ENCODE measurements at regions of chr9 and their contacts with region 1.

Region 1: DNA sequence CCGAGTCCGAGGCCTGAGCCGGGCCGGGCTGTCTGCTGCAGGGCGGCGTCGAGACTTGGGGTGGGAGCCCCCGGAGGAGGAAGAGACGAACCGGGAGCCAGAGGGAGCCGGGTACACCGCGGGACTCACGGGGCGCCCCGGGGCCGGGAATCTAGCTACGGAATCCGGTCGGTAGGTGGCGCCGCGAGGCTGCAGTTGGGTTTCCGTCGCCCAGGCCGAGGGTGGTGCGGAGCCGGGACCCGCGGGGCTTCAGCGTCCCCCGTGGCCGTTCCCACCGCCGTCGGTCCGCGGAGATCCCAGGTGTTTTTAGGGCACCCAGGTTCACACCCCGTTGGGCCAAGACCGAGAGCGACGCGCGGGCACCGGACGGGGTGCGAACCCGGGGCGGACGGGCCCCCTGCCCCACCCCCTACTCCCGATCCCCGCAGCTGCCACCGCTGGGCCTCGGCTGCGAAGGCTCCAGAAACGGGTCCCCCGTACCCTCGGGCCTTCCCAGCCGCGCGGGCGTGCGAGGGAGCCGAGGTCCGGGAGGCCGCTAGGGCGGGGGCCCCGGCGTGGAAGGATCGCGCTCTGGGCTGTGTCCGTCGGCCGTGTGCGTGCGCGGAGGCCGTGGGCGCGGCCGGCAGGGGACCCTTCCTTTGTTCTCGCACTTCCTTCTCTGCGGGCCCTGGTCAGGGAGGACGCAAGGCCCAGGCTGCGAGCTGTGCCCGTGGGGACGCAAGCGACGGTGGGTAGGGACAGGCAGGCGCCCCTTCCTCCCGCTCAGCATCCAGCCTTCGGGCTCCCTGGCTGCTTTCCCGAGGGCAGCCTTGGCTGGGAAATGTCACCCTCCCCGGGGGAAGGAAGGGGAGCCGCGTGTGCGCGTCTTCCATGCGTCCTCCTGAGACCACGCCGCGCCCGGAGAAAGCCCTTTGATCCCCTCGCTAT is 146.6 kb downstream of the GAPVD1 start:
- DNase-seq: no peak
- H3K4me3 ChIP-seq: peak overlapping the region; percentile 53 to 78
- H3K27ac ChIP-seq: peak overlapping the region; percentile 78
- H3K4me1 ChIP-seq: peaks cover 14% of the 10 kb centered on the region
- H3K27me3 ChIP-seq: no peaks in the 10 kb centered on the region
- CTCF ChIP-seq: peak; percentile 20 to 83 (median 74)
- POLR2A ChIP-seq: no peak

Region 2: DNA sequence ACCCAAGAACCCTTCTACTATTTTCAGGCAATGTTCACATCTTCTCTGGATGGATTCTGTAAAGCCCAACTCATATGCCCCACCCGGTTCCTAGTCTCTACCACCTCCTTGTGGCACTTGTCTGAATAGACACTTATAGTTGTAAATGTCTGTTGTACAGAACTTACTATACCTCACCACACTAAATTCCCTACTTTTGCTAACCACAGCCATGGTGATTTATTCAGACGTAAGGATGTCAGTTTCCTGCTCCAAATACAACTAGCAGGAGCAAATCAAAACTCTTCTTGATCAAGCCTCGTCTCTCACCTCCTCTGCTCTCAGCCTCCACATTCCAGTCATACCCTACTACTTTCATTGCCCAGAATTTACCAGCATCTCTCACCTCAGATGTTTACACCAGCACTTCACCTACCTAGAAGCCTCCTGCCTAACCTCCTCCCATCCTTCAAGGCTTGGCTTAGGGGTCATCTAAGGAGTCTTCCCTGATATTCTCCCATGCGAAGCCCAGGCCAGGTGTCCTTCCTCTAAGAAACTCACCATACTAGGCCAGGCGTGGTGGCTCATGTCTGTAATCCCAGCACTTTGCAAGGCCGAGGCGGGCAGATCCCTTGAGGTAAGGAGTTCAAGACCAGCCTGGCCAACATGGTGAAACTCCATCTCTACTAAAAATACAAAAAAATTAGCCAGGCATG is 223.3 kb after region 1 on chr9:
- intact Hi-C with region 1: loop called (anchors 10 kb)
- DNase-seq: no peak
- H3K4me3 ChIP-seq: no peak overlapping the region
- H3K27ac ChIP-seq: no peak overlapping the region
- H3K4me1 ChIP-seq: peaks cover 27% of the 10 kb centered on the region
- H3K27me3 ChIP-seq: no peaks in the 10 kb centered on the region
- CTCF ChIP-seq: peak in 2 of 3 experiments; percentile 37 to 51
- POLR2A ChIP-seq: no peak

Region 3: DNA sequence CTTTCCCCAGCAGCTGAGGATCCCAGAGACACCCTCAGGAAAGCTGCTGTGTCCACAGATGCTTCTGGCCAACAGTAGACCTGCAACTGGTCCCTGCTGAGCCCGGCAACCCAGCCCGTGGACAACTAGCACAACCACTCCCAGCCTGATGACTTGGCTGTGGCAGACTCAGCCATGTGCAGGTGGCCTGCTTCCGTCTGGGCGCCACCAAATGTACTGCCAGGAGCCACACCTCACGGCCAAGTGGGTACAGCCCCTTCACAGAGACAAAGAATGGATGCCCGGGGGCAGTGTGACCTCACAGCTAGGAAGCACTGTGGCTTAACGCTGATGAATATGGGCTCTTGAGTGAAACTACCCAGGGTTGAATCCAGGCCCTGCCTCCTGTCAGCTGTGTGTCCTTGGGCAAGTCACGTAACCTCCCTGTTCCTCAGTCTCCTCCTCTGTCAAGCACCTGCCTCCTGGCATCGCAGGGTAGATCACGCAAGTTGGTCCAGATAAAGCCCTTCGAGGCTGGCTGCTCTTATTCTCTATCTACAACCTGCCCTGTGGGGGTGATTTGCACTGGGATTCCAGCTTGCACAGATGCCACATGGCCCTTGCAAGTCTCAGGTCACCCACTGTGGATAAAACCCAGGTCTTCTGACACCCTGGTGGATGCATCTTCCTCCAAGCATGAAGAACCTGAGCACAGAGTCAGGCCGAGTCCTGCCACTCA is 563.9 kb after region 1 on chr9:
- intact Hi-C with region 1: no loop called
- DNase-seq: peak in 1 of 2 donors; percentile 76
- H3K4me3 ChIP-seq: no peak overlapping the region
- H3K27ac ChIP-seq: no peak overlapping the region
- H3K4me1 ChIP-seq: no peaks in the 10 kb centered on the region
- H3K27me3 ChIP-seq: no peaks in the 10 kb centered on the region
- CTCF ChIP-seq: no peak
- POLR2A ChIP-seq: no peak

Region 4: DNA sequence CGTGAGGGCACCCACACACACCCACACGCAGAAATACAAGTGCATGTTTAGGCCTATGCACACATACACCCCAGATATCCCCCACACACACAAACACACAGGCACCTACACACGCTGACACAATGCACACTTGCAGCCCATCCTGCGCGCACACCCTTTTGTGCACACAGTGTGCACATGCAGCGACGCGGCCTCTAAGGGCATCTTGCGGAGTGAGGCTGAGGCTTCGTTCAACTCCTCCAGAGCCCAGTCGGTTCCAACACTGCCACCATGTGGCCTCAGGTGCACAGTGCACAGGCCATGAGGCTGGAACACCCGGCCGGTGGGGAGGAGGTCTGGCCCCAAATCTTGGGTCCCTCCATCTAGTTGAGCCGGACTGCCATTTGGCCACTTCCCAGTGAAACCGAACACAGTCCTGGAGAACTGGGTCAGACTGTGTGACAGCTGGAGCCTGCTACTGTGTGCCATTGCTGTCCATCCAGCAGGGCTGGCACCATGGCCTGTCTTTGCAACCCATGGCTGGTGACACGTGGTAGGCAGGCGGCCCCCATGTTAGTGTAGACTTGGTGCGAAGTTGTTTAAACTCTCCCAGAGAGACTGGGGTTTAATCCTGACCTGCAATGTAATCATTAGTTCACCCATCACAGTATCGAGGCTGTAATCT is 820.7 kb after region 1 on chr9:
- intact Hi-C with region 1: loop called (anchors 5 kb)
- DNase-seq: peak; percentile 80 to 91
- H3K4me3 ChIP-seq: no peak overlapping the region
- H3K27ac ChIP-seq: no peak overlapping the region
- H3K4me1 ChIP-seq: no peaks in the 10 kb centered on the region
- H3K27me3 ChIP-seq: no peaks in the 10 kb centered on the region
- CTCF ChIP-seq: peak; percentile 63 to 89 (median 75)
- POLR2A ChIP-seq: no peak

Region 5: DNA sequence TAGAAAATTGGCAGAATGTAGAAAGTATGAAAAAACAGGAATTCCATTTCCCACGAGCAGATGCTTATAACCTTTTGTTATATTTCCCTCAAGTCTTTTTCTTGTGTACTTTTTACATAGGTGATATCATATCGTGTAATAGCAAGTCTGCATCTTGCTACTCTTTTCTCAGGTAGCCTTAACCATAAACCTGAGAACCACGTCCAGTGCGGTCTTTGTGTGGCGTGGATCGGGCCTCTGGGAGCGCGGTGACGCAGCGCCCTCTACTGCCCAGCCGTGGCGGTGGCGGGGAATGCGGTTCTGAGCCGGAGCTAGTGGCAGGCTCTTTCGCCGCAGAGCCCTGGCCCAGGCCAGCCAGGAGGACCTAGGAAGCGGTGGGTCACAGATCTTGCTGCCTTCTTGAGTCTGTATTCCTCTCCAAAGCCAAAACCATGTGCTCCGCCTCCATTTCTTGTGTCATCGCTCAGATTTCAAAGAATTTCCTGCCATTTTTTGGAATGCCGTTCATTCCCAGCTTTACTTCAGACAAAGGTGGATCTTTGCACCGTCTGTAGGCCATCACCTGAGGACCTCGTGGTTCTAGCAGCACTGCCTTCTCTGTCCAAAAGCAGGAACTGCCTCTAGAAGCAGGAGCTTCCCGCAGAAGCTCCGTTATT is 990.3 kb after region 1 on chr9:
- intact Hi-C with region 1: loop called (anchors 5 kb)
- DNase-seq: no peak
- H3K4me3 ChIP-seq: no peak overlapping the region
- H3K27ac ChIP-seq: peak overlapping the region; percentile 24
- H3K4me1 ChIP-seq: peaks cover 37% of the 10 kb centered on the region
- H3K27me3 ChIP-seq: no peaks in the 10 kb centered on the region
- CTCF ChIP-seq: peak; percentile 66 to 93 (median 92)
- POLR2A ChIP-seq: no peak